Activated CD4-positive, alpha-beta memory T cell treated with anti-CD3 and anti-CD28 coated beads, Interleukin-2, amount 10 ng/mL, durations not matched to agents 7 days and 5 days (primary cell): ENCODE measurements at regions of chr3 and their contacts with region 1.

Region 1: GRCh38 chr3:53114011-53114400 is 16.2 kb downstream of the RFT1 start:
- DNase-seq: peak; percentile 86
- H3K4me3 Mint-ChIP-seq: no peak overlapping the region
- H3K27ac Mint-ChIP-seq: no peak overlapping the region
- H3K4me1 Mint-ChIP-seq: peaks cover 20% of the 10 kb centered on the region
- H3K27me3 Mint-ChIP-seq: no peaks in the 10 kb centered on the region

Region 2: DNA sequence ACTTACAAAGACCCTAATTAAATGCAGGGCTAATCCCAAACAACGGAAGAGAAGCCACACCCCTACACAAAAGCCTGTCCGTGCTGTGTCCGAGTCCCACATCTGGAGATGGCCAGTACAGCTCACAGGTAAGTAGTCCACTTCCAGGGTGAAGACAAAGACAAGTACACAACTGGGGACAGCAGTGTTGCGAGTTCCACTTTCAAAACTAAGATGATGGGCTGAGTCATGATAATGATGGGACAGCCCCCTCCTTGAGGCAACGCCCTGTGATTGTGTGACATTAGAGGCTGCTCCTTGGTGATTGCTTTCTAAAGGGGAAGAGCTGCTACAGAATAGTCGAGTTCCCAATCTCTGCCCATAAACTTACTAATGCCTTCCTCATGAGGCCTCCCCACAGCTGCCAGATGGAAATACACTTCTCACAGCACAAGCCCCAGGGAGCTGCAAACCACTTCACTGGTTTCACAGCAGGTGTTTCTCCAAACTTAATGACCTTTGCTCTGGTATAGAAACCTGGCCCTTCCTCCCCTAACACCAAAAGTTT is 11.3 kb before region 1 on chr3:
- CTCF ChIA-PET with region 1: interaction called, 31 read pairs
- POLR2A ChIA-PET with region 1: interaction called, 13 read pairs
- DNase-seq: peak; percentile 69
- H3K4me3 Mint-ChIP-seq: peak overlapping the region; percentile 63
- H3K27ac Mint-ChIP-seq: peak overlapping the region; percentile 95
- H3K4me1 Mint-ChIP-seq: peaks cover 61% of the 10 kb centered on the region
- H3K27me3 Mint-ChIP-seq: no peaks in the 10 kb centered on the region

Region 3: DNA sequence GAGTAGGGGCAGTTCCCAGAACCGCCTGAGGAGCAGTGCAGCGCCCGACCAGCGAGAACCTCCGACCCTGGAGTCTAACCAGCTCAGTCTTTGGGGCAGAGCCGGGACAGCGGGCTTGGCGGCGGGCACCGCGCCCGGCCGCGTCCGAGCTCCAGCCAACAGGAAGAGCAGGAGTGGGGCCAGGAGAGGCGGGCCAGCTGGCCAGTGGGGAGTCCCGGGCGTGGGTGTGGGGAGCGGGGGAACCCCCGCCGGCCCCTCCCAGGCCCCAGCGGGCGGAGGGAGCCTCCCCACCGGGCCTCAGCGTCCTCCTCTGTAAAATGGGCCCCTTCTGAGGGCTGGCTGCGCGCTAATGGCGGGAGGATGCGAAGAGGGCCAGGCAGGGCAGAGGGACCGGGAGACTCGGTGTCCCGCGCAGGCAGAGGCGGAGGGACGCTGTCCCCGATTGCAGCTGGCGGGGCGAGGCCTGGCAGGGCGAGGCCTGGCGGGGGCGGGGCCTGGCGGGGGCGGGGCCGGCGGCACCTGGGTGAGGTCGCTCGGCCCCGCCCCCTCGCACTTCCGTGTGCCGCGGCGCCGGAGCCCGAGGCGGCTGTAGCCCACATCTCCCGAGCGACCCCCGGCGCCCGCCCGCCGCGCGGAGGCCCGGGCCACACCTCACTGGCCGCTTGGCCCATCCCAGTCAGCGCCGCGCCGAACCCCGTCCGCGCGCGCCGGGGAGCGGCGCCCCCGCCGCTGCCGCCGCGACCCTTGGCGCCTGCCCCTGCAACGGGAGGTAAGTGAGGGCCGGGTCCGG is 46.8 kb after region 1 on chr3 and contains the start of gene PRKCD:
- CTCF ChIA-PET with region 1: interaction called, 16 read pairs
- POLR2A ChIA-PET with region 1: interaction called, 3 read pairs
- DNase-seq: peak; percentile 83
- H3K4me3 Mint-ChIP-seq: peak within 1 kb of the TSS; percentile 86
- H3K27ac Mint-ChIP-seq: peak within 1 kb of the TSS; percentile 68
- H3K4me1 Mint-ChIP-seq: peaks cover 21% of the 10 kb centered on the region
- H3K27me3 Mint-ChIP-seq: peaks cover 31% of the 10 kb centered on the region
- total RNA-seq, gene PRKCD: 23.4 to 24.8 TPM

Region 4: GRCh38 chr3:53180305-53181023 is 66.5 kb after region 1 on chr3:
- CTCF ChIA-PET with region 1: no interaction called
- POLR2A ChIA-PET with region 1: no interaction called
- DNase-seq: no peak
- H3K4me3 Mint-ChIP-seq: no peak overlapping the region
- H3K27ac Mint-ChIP-seq: no peak overlapping the region
- H3K4me1 Mint-ChIP-seq: peaks cover 5% of the 10 kb centered on the region
- H3K27me3 Mint-ChIP-seq: no peaks in the 10 kb centered on the region

Region 5: DNA sequence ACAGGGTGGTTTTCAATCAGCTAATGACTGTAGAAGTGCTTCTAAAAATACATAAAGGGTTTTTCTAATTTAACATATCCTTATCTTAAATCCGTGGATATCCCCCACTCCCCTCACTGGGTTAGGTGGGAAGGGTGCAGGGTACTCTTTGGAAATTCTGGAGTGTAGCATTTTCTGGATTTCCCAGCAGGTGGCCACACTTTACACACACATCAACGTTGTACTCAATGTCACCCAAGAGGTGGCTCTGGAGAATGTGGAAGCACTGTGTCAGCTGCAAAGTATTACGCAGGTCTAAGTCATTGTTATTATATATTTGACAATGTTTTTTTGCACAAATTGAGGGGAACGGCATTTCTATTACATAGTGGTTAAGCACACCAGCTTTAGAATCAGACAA is 563.4 kb after region 1 on chr3:
- CTCF ChIA-PET with region 1: no interaction called
- POLR2A ChIA-PET with region 1: no interaction called
- DNase-seq: no peak
- H3K4me3 Mint-ChIP-seq: no peak overlapping the region
- H3K27ac Mint-ChIP-seq: no peak overlapping the region
- H3K4me1 Mint-ChIP-seq: peaks cover 1% of the 10 kb centered on the region
- H3K27me3 Mint-ChIP-seq: peaks cover 38% of the 10 kb centered on the region